MCF 10A (cell line): ENCODE measurements at regions of chr13 and their contacts with region 1.

Region 1: GRCh38 chr13:40060296-40061007 is 405.0 kb downstream of the COG6 start:
- DNase-seq: peak; percentile 99
- H3K4me3 Mint-ChIP-seq: peak overlapping the region; percentile 67
- H3K27ac Mint-ChIP-seq: peak overlapping the region; percentile 96
- H3K4me1 Mint-ChIP-seq: peaks cover 74% of the 10 kb centered on the region
- H3K27me3 Mint-ChIP-seq: no peaks in the 10 kb centered on the region
- CTCF ChIP-seq: no peak

Region 2: DNA sequence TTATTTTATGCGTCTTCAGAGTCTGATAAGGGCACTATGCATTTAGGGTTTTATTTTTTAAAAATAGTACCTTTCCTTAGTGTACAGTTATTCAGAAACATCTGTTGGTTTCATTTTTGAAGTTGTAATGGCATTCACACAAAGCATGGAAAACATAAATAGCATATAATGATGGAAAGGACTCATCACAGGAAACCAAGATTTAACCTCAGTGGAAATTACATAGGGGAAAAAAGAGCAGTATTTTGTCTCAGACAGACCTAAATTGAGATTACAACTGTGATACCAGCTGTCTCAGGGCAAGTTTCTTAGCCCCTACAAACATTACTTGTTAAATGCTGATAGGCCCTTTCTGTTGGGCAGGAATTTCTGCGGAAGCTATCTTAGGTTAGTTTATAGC is 965.0 kb before region 1 on chr13:
- CTCF ChIA-PET with region 1: no interaction called
- POLR2A ChIA-PET with region 1: no interaction called
- intact Hi-C with region 1: no loop called
- DNase-seq: no peak
- H3K4me3 Mint-ChIP-seq: no peak overlapping the region
- H3K27ac Mint-ChIP-seq: no peak overlapping the region
- H3K4me1 Mint-ChIP-seq: no peaks in the 10 kb centered on the region
- H3K27me3 Mint-ChIP-seq: peaks cover 45% of the 10 kb centered on the region
- CTCF ChIP-seq: no peak

Region 3: GRCh38 chr13:40031031-40031430 is 29.4 kb before region 1 on chr13:
- CTCF ChIA-PET with region 1: interaction called, 7 read pairs
- POLR2A ChIA-PET with region 1: interaction called, 22 read pairs
- intact Hi-C with region 1: no loop called
- DNase-seq: peak; percentile 36
- H3K4me3 Mint-ChIP-seq: no peak overlapping the region
- H3K27ac Mint-ChIP-seq: peak overlapping the region; percentile 74
- H3K4me1 Mint-ChIP-seq: peaks cover 8% of the 10 kb centered on the region
- H3K27me3 Mint-ChIP-seq: no peaks in the 10 kb centered on the region
- CTCF ChIP-seq: no peak

Region 4: GRCh38 chr13:40109356-40109844 is 48.9 kb after region 1 on chr13:
- CTCF ChIA-PET with region 1: interaction called, 4 read pairs
- POLR2A ChIA-PET with region 1: interaction called, 49 read pairs
- intact Hi-C with region 1: loop called (anchors 2 kb)
- DNase-seq: peak; percentile 94
- H3K4me3 Mint-ChIP-seq: peak overlapping the region; percentile 53
- H3K27ac Mint-ChIP-seq: peak overlapping the region; percentile 88
- H3K4me1 Mint-ChIP-seq: peaks cover 59% of the 10 kb centered on the region
- H3K27me3 Mint-ChIP-seq: no peaks in the 10 kb centered on the region
- CTCF ChIP-seq: no peak

Region 5: DNA sequence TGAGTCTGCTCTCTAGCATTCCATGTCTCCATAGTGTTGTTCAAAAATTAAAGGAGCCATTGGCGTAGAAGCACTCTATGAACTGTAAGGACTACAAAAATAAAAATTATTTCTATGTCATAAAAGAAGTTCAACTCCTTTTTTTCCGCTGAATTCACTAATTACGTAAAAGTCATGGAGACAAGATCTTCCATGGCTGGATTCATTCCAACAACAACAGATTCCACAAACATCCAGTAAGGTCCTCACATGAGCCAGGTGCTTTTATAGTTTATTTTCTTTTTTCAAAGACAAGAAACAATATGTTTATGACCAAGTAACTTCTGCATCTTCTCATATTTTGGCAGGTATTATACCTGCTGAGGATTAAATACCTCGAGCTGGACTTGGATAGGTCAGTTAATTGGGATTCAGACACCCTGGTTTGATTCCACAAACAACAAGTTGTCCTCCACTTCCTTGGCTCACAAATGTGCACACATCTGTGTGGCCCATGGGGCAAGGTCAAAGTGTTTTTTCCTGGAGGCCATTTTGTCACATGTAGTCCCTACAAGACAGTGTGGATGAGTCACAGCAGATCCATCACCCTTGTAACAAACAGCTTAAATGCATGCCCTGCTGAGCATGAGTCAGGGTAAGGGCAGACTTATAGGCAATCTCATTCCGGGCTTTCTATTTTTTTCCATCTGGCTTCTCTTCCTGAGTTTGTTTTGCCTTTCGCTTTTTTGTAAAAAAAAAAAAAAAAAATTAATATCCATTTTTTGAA is 70.6 kb after region 1 on chr13:
- CTCF ChIA-PET with region 1: interaction called, 6 read pairs
- POLR2A ChIA-PET with region 1: interaction called, 13 read pairs
- intact Hi-C with region 1: no loop called
- DNase-seq: peak; percentile 89
- H3K4me3 Mint-ChIP-seq: no peak overlapping the region
- H3K27ac Mint-ChIP-seq: peak overlapping the region; percentile 92
- H3K4me1 Mint-ChIP-seq: peaks cover 29% of the 10 kb centered on the region
- H3K27me3 Mint-ChIP-seq: no peaks in the 10 kb centered on the region
- CTCF ChIP-seq: no peak

Region 6: DNA sequence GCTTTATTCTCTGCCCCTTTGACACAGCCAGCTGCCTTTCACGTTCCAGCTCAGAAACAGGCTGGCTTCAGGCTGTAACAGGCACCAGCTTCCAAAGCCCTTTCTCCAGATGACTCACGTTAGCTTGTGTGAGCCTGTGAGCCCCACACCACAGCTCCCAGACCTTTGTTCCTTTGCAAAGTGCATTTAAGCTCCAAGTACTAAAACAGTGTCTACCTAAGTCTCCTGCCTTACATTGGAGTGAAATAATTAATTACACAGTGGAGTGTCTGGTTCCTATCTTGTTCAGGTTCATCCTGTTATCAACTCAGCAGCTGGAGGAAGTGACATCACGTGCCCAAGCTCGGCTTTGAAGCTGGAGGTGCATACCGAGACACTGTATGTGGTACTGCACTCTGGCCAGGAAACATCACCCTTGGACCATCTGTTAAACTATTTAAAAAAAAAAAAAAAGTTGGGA is 130.2 kb after region 1 on chr13:
- CTCF ChIA-PET with region 1: no interaction called
- POLR2A ChIA-PET with region 1: interaction called, 18 read pairs
- intact Hi-C with region 1: no loop called
- DNase-seq: peak; percentile 78
- H3K4me3 Mint-ChIP-seq: peak overlapping the region; percentile 10
- H3K27ac Mint-ChIP-seq: peak overlapping the region; percentile 70
- H3K4me1 Mint-ChIP-seq: peaks cover 23% of the 10 kb centered on the region
- H3K27me3 Mint-ChIP-seq: no peaks in the 10 kb centered on the region
- CTCF ChIP-seq: no peak

Region 7: DNA sequence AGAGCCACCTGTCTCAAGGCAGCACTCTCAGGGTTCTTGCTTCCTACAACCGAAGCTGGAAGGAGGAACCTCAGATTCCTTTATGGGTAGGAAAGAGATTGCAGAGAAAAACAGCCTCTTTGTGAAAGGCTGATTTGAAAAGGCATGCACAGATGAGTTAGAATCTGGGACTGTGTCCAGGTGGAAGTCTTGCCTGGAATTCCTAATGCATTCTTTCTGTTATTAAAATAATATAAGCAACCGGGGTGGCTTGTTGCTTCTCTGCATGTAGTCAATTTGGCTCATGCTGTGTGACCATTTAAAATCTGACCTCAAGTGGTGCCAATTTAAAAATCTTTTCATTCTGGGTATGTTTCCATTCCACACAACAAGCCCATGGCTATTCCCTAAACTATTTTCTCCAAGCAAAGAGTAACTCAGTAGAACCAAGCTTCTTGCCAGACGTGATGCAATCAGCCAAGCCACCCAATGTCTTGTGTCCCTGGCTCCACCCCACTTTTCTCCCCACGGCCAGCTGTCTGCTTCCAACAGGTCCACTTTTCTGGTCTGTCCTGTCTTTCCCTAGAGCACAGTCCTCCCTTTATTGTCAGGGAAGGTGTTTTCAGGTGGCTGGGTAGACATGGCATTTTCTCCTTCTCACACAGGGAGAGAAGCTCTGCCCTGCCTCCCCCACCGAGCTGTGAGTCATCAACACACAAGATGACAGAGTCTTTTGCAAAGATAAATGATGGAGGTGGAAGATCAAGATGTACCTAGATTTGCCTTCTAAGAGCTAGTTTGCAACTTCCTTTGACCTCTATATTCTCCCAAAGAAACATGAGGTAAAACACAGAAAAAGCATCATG is 211.7 kb after region 1 on chr13:
- CTCF ChIA-PET with region 1: interaction called, 3 read pairs
- POLR2A ChIA-PET with region 1: interaction called, 37 read pairs
- intact Hi-C with region 1: no loop called
- DNase-seq: peak; percentile 87
- H3K4me3 Mint-ChIP-seq: peak overlapping the region; percentile 15
- H3K27ac Mint-ChIP-seq: peak overlapping the region; percentile 32
- H3K4me1 Mint-ChIP-seq: peaks cover 39% of the 10 kb centered on the region
- H3K27me3 Mint-ChIP-seq: no peaks in the 10 kb centered on the region
- CTCF ChIP-seq: no peak